ENCODE measurements at regions of chr22 and their contacts with region 1.

Region 1: GRCh38 chr22:38353142-38353629 is 36.0 kb upstream of the CSNK1E start:
- DNase-seq: peak; percentile 72
- H3K4me3 ChIP-seq: no peak overlapping the region
- H3K27ac ChIP-seq: no peak overlapping the region
- H3K4me1 ChIP-seq: no peaks in the 10 kb centered on the region
- H3K27me3 ChIP-seq: no peaks in the 10 kb centered on the region
- CTCF ChIP-seq: peak; percentile 98

Region 2: DNA sequence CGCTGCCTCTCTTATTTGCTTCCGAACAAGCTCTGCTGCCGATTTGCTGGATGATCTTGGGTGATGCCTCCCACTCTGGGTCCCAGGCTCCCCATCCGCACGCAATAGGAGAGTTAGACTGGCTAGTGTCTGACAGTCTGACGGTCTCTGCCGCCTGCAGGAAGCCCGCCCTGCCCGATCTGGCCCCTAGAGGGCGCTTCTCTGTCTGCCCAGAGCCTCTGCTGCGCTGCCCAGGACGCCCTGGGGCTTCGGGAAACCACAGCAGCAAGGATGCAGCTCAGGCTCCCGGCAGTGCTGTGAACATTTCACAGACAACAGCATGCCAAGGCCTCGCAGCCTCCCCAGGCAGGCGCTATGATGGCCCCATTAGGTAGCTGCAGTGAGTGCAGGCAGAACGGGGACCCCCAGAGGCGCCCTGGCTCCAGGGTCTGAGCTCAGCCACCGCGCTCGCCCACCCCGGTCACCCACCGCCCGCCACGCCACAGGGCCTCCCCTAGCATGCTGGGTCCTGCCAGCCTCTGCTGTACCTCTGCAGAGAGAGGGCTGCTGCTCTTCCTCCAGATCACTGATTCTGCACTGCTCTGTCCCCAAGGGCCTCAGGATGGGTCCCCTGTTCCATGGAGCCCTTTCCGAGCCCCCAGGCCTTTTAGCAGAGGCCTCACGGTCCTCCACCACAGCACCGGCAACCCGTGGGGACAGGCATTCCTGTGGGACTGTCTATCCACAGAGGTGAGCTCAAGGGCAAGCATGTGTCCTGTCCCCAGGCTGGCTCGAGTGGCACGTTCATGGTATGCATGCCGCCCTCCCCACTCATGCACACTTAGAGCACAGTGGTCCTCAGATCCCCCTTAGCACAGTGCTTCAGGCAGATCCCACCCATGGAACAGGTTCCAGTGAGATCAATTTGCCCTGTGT is 238.4 kb before region 1 on chr22:
- intact Hi-C with region 1: loop called (anchors 10 kb)
- DNase-seq: peak; percentile 88
- H3K4me3 ChIP-seq: no peak overlapping the region
- H3K27ac ChIP-seq: no peak overlapping the region
- H3K4me1 ChIP-seq: peaks cover 9% of the 10 kb centered on the region
- H3K27me3 ChIP-seq: no peaks in the 10 kb centered on the region
- CTCF ChIP-seq: peak; percentile 96

Region 3: GRCh38 chr22:38262051-38262795 is 91.0 kb before region 1 on chr22:
- intact Hi-C with region 1: loop called (anchors 5 kb)
- DNase-seq: peak; percentile 74
- H3K4me3 ChIP-seq: no peak overlapping the region
- H3K27ac ChIP-seq: peak overlapping the region; percentile 28
- H3K4me1 ChIP-seq: peaks cover 3% of the 10 kb centered on the region
- H3K27me3 ChIP-seq: no peaks in the 10 kb centered on the region
- CTCF ChIP-seq: peak; percentile 72